ENCODE measurements at regions of chr15 and their contacts with region 1.

Region 1: GRCh38 chr15:29014493-29014892 is 128.7 kb downstream of the APBA2 start:
- DNase-seq: no peak
- H3K4me3 Mint-ChIP-seq: no peak overlapping the region
- H3K27ac Mint-ChIP-seq: no peak overlapping the region
- H3K4me1 Mint-ChIP-seq: peaks cover 35% of the 10 kb centered on the region
- H3K27me3 Mint-ChIP-seq: no peaks in the 10 kb centered on the region

Region 2: DNA sequence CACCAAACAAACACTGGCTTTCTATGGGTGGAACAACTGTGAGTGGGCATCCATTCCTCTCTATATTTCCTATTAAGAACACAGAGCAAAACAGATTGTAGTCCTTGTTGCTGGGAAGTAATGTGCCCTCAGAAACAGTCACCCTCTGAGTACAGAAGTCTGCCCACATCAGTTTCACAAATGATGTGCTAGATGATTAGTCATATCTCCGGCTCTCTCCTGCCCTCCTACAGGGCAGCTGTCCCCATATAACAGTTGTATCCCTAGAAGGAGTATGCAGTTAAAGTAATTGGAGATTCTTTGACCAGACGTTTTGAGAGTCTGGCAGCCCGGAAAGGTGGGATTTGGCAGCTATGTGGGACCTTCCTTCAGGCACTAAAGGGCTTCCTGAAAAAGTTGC is 31.2 kb after region 1 on chr15:
- CTCF ChIA-PET with region 1: no interaction called
- intact Hi-C with region 1: loop called (anchors 5 kb)
- DNase-seq: peak; percentile 45
- H3K4me3 Mint-ChIP-seq: no peak overlapping the region
- H3K27ac Mint-ChIP-seq: no peak overlapping the region
- H3K4me1 Mint-ChIP-seq: peaks cover 48% of the 10 kb centered on the region
- H3K27me3 Mint-ChIP-seq: no peaks in the 10 kb centered on the region

Measured in activated naive CD4-positive, alpha-beta T cell treated with anti-CD3 and anti-CD28 coated beads for 36 hours (primary cell).